ENCODE measurements at regions of chr17 and their contacts with region 1.

Region 1: DNA sequence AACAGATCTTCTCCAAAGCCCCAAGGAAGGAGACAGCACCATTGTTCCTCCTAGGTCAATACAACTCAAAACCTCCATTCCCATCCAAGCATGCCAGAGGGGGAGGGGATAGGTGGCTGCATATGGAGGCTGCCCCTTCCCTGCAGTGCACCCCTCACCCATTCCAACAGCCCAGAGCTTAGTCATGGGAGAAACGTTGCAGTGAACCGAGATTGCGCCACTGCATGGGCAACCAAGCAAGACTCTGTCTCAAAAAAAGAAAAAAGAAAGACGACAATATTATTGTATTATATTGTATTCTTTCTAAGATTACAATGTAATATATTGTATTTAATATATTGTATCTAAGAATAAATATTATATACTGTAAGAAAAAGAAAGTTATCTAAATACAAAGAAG is 36.4 kb upstream of the CD300E start:
- DNase-seq: no peak
- ATAC-seq: no peak
- H3K4me3 ChIP-seq: no peak overlapping the region
- H3K27ac ChIP-seq: no peak overlapping the region
- H3K4me1 ChIP-seq: peaks cover 0 to 7% of the 10 kb centered on the region in 2 donors
- H3K27me3 ChIP-seq: peaks cover 0 to 38% of the 10 kb centered on the region in 2 donors
- CTCF ChIP-seq: no peak

Region 2: GRCh38 chr17:74569020-74570003 is 90.6 kb before region 1 on chr17:
- intact Hi-C with region 1: no loop called
- DNase-seq: peak in 2 of 4 donors; percentile 8 to 91
- ATAC-seq: peak; percentile 78
- H3K4me3 ChIP-seq: no peak overlapping the region
- H3K27ac ChIP-seq: peak overlapping the region in 1 of 2 donors; percentile 56
- H3K4me1 ChIP-seq: peaks cover 0 to 36% of the 10 kb centered on the region in 2 donors
- H3K27me3 ChIP-seq: peaks cover 0 to 45% of the 10 kb centered on the region in 2 donors
- CTCF ChIP-seq: no peak

Region 3: GRCh38 chr17:74736513-74737298 is 76.8 kb after region 1 on chr17 and contains the start of gene RAB37:
- intact Hi-C with region 1: loop called in 1 of 2 experiments (anchors 5 kb)
- DNase-seq: peak in 2 of 4 donors; percentile 61 to 92
- ATAC-seq: peak; percentile 77
- H3K4me3 ChIP-seq: peak within 1 kb of the TSS; percentile 7 to 47
- H3K27ac ChIP-seq: peak within 1 kb of the TSS in 1 of 2 donors; percentile 73
- H3K4me1 ChIP-seq: peaks cover 6 to 64% of the 10 kb centered on the region in 2 donors
- H3K27me3 ChIP-seq: peaks cover 21 to 60% of the 10 kb centered on the region in 2 donors
- CTCF ChIP-seq: peak; percentile 18 to 41
- polyA plus RNA-seq, gene RAB37: 9.4 to 11.2 (median 10.5) TPM